ENCODE measurements at regions of chr14 and their contacts with region 1.

Region 1: GRCh38 chr14:67526676-67527459 is 6.2 kb upstream of the PLEKHH1 start:
- DNase-seq: no peak
- H3K4me3 Mint-ChIP-seq: no peak overlapping the region
- H3K27ac Mint-ChIP-seq: no peak overlapping the region
- H3K4me1 Mint-ChIP-seq: no peaks in the 10 kb centered on the region
- H3K27me3 Mint-ChIP-seq: peaks cover 73% of the 10 kb centered on the region

Region 2: GRCh38 chr14:67377916-67378315 is 149.0 kb before region 1 on chr14:
- intact Hi-C with region 1: no loop called
- DNase-seq: no peak
- H3K4me3 Mint-ChIP-seq: no peak overlapping the region
- H3K27ac Mint-ChIP-seq: no peak overlapping the region
- H3K4me1 Mint-ChIP-seq: peaks cover 11% of the 10 kb centered on the region
- H3K27me3 Mint-ChIP-seq: no peaks in the 10 kb centered on the region

Region 3: GRCh38 chr14:67571272-67571850 is 44.5 kb after region 1 on chr14:
- intact Hi-C with region 1: loop called (anchors 1 kb)
- DNase-seq: peak; percentile 49
- H3K4me3 Mint-ChIP-seq: no peak overlapping the region
- H3K27ac Mint-ChIP-seq: no peak overlapping the region
- H3K4me1 Mint-ChIP-seq: no peaks in the 10 kb centered on the region
- H3K27me3 Mint-ChIP-seq: peaks cover 3% of the 10 kb centered on the region

Region 4: DNA sequence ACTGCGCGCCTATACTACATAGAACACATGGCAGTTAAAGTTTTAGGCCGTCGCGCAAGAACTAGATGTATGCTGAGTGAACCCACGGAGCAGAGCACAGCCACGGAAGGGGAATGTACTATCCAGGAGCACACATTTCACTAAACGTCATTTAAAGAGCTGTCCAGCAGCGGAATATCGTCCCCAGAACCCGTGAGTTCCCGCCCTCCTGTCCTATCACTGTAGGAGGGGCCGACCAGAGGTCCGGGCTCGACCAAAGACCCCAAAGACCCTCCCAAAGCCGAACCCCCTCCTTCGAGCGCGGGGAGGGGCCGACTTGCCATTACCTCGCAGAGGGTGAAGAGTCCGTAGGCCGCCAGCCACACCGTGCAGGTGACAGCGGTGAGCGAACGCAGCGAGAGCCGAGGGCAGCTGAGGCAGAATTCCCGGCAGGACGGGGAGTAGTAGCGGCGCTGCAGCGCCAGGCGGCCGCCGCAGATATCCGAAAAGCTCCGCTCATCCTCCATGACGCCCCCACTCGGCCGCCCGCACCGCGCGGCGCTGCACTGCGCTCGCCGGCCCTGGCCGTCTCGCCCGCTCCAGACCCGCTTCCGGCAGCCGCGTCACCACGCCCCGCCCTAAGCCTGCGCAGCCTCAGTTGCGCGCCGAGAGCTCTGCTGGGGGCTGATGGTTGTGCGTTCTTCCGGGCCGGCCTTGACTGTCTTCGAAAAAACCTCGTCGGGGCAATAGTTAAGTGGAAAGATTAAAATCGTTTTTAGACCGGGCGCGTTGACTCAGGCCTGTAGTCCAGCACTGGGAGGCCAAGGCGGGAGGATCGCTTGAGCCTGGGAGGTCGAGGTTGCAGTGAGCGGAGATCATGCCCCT is 73.1 kb after region 1 on chr14 and contains the start of gene PIGH:
- intact Hi-C with region 1: no loop called
- DNase-seq: peak; percentile 92
- H3K4me3 Mint-ChIP-seq: peak within 1 kb of the TSS; percentile 92
- H3K27ac Mint-ChIP-seq: peak within 1 kb of the TSS; percentile 91
- H3K4me1 Mint-ChIP-seq: peaks cover 16% of the 10 kb centered on the region
- H3K27me3 Mint-ChIP-seq: peaks cover 9% of the 10 kb centered on the region
- total RNA-seq, gene PIGH: 14.5 and 21.8 TPM in 2 replicates

Region 5: GRCh38 chr14:67738740-67739504 is 212.1 kb after region 1 on chr14:
- intact Hi-C with region 1: no loop called
- DNase-seq: no peak
- H3K4me3 Mint-ChIP-seq: no peak overlapping the region
- H3K27ac Mint-ChIP-seq: no peak overlapping the region
- H3K4me1 Mint-ChIP-seq: no peaks in the 10 kb centered on the region
- H3K27me3 Mint-ChIP-seq: peaks cover 4% of the 10 kb centered on the region